ENCODE measurements at regions of chr2 and their contacts with region 1.

Region 1: GRCh38 chr2:101036562-101037457 is 34.7 kb downstream of the RPL31 start:
- DNase-seq: no peak
- ATAC-seq: 0 out of 6 replicates have a peak, but pooled peaks of 1 of the 2 experiments have one; percentile 13
- H3K4me3 ChIP-seq: no peak overlapping the region
- H3K27ac ChIP-seq: peak overlapping the region; percentile 58 to 80
- H3K4me1 ChIP-seq: peaks cover 27% of the 10 kb centered on the region; the same call in 2 of the 3 replicates
- CTCF ChIP-seq: peak; percentile 59
- EP300 ChIP-seq: no peak
- POLR2A ChIP-seq: no peak
- RAD21 ChIP-seq: peak; percentile 75 to 80

Region 2: DNA sequence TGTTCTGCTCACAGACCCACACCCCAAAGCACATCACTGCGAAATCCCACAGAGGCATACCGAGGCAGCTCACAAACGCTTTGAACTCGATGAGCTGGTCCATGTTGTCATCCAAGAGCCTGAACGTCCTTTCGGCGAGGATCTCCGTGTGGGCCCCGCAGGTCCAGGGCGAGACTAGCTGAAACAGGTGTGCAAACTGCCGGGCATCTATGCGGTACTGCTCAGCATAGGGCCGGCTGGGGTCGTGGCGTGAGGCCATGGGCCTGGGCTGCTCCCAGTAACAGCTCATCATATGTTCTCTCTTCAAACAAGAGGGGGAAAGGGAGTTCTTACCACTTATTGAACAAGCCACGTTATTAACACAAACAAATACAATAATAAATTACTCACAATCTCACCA is 14.6 kb before region 1 on chr2:
- CTCF ChIA-PET with region 1: interaction called, 17 read pairs
- POLR2A ChIA-PET with region 1: interaction called, 3 read pairs
- DNase-seq: no peak
- ATAC-seq: peak in 1 of 2 experiments; percentile 23; a peak in 2 of 6 replicates
- H3K4me3 ChIP-seq: no peak overlapping the region
- H3K27ac ChIP-seq: no peak overlapping the region
- H3K4me1 ChIP-seq: no peaks in the 10 kb centered on the region
- CTCF ChIP-seq: no peak
- EP300 ChIP-seq: no peak
- POLR2A ChIP-seq: no peak
- RAD21 ChIP-seq: no peak

Region 3: GRCh38 chr2:101047075-101047766 is 10.4 kb after region 1 on chr2:
- CTCF ChIA-PET with region 1: interaction called, 69 read pairs
- POLR2A ChIA-PET with region 1: no interaction called
- DNase-seq: peak; percentile 36 to 42
- ATAC-seq: peak; percentile 62; a peak in 5 of 6 replicates
- H3K4me3 ChIP-seq: no peak overlapping the region
- H3K27ac ChIP-seq: peak overlapping the region; percentile 27 to 69; a peak in 4 of 6 replicates
- H3K4me1 ChIP-seq: peaks cover 16% of the 10 kb centered on the region
- CTCF ChIP-seq: no peak
- EP300 ChIP-seq: no peak
- POLR2A ChIP-seq: no peak
- RAD21 ChIP-seq: no peak

Region 4: DNA sequence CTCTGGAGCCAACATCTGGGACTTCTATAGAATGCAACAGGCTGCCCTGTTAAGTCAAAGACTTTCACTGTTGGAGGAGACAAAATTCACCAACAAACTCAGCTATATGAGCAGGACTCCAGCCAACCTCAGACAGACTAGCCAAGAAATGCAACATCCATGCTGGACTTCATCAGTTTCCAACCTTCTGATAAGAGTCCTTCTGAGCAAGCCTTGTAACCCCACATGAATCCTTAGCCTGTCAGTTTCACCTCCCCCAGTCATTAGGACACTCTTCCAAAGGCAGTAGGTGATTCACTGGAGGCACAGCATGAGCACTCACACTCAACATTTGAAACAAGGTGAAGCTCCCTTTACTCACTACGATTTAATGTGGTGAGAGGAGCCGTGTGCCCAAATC is 108.6 kb after region 1 on chr2:
- CTCF ChIA-PET with region 1: interaction called, 107 read pairs
- POLR2A ChIA-PET with region 1: interaction called, 6 read pairs
- DNase-seq: peak in 1 of 2 experiments; percentile 43
- ATAC-seq: peak; percentile 16 to 43; a peak in 4 of 6 replicates
- H3K4me3 ChIP-seq: peak overlapping the region; percentile 6; the same call in 1 of the 3 replicates
- H3K27ac ChIP-seq: peak overlapping the region; percentile 1 to 56; a peak in 4 of 6 replicates
- H3K4me1 ChIP-seq: peaks cover 68% of the 10 kb centered on the region
- CTCF ChIP-seq: no peak
- EP300 ChIP-seq: no peak
- POLR2A ChIP-seq: no peak
- RAD21 ChIP-seq: no peak

Measured in A549 (cell line).